Right lobe of liver (tissue), 6 donors: ENCODE measurements at regions of chr22 and their contacts with region 1.

Region 1: GRCh38 chr22:29359469-29359868 is 28.9 kb downstream of the AP1B1 start:
- DNase-seq: peak; percentile 61 to 74 (median 65)
- ATAC-seq: peak; percentile 78 to 90 (median 81)
- H3K4me3 ChIP-seq: no peak overlapping the region
- H3K27ac ChIP-seq: no peak overlapping the region
- H3K4me1 ChIP-seq: peaks cover 0 to 6% (median 0%) of the 10 kb centered on the region in 4 donors
- H3K27me3 ChIP-seq: no peaks in the 10 kb centered on the region
- CTCF ChIP-seq: peak; percentile 59 to 87 (median 71)
- POLR2A ChIP-seq: no peak

Region 2: GRCh38 chr22:28989035-28989464 is 370.4 kb before region 1 on chr22:
- intact Hi-C with region 1: no loop called
- DNase-seq: no peak
- ATAC-seq: no peak
- H3K4me3 ChIP-seq: no peak overlapping the region
- H3K27ac ChIP-seq: no peak overlapping the region
- H3K4me1 ChIP-seq: peaks cover 0 to 22% (median 0%) of the 10 kb centered on the region in 4 donors
- H3K27me3 ChIP-seq: no peaks in the 10 kb centered on the region
- CTCF ChIP-seq: no peak
- POLR2A ChIP-seq: no peak

Region 3: DNA sequence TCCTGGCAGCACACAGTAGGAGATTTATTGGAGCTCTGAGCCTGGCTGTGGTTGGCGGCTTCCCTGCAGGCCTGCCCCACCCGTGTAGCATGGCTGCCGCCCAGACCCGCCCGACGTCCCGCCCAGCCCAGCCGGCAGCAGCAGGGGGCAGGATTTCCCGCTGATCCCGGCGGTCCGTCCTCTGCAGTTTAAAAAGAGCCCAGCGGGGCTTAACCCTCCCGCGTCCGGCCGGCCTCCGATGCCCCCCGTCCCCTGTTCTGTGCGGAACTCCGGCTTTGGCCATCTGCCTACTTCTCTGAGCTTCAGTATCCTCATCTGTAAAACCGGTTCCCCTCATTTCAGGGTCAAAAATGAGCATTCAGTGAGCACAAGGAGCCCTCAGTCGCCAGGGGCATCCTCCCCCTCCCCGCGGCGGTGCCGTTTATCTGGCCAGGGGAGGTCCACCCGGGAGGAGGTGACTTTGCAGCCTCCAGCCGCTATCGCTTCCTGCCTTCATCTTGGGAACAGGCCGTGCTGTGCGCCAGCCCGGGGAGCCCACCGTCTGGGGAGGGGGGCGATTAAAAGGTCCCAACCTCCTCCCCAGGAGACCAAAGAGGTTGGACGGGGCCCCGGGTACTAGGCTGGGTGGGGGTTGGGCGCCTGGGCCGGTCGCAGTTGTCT is 53.2 kb before region 1 on chr22 and contains the start of gene GAS2L1:
- intact Hi-C with region 1: loop called (anchors 5 to 10 kb)
- DNase-seq: peak; percentile 89
- ATAC-seq: peak; percentile 67 to 74 (median 69)
- H3K4me3 ChIP-seq: peak within 1 kb of the TSS; percentile 87 to 94 (median 89)
- H3K27ac ChIP-seq: peak within 1 kb of the TSS; percentile 50 to 81 (median 66)
- H3K4me1 ChIP-seq: peaks cover 2 to 24% (median 10%) of the 10 kb centered on the region in 4 donors
- H3K27me3 ChIP-seq: no peaks in the 10 kb centered on the region
- CTCF ChIP-seq: peak; percentile 73 to 79 (median 76)
- POLR2A ChIP-seq: no peak
- total RNA-seq, gene GAS2L1: 8.9 to 15.8 (median 11.5) TPM